ENCODE measurements at regions of chr17 and their contacts with region 1.

Region 1: DNA sequence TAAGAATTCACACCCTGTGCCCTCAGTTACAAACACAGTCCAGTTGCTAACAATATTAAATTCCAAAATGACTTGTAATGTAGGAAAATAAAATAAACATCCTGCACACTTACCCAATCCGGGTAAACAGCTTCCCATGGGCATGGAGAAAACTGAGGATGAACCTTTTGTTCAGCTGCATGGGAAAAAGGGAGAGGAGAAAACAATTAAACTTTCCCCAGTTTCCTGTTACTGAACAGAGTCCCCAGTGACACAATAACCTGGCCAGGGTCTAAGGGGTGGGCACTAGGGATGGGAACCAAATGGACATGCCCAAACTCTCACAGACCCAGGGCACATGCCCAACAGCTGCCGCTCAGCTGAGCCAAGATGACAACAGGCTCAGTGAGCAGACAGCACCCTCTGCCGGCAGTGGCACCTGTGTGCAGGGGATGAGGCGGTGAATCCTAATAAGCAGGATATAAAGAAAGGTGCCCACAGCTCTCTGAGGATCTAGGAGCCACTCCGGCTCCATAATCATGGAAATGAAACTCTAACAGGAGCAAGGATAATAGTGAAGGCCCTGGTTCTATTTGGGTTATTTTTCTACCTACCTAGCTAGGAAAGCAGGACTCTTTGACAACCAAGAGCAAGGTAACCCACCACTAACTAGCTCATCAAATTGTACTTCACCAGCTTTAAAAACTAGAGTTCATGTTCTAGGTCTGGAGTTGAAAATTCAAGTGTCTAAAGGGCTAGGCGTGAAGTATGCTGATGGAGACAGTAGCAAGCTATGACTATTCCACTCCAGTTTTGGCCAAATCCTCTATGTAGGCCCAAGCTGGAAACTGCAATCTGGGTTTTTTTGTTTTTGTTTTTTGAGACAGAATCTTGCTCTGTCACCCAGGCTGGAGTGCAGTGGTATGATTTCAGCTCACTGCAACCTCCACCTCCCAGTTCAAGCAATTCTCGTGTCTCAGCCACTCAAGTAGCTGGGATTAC is 58.8 kb downstream of the SMG6 start:
- DNase-seq: peak; percentile 84
- H3K4me3 ChIP-seq: no peak overlapping the region
- H3K27ac ChIP-seq: no peak overlapping the region
- H3K4me1 ChIP-seq: peaks cover 14% of the 10 kb centered on the region
- CTCF ChIP-seq: peak; percentile 99

Region 2: GRCh38 chr17:1908699-1909309 is 336.0 kb before region 1 on chr17:
- CTCF ChIA-PET with region 1: no interaction called
- POLR2A ChIA-PET with region 1: interaction called, 3 read pairs
- intact Hi-C with region 1: loop called (anchors 1 kb)
- DNase-seq: peak; percentile 79
- H3K4me3 ChIP-seq: peak overlapping the region; percentile 44
- H3K27ac ChIP-seq: no peak overlapping the region
- H3K4me1 ChIP-seq: peaks cover 52% of the 10 kb centered on the region
- CTCF ChIP-seq: peak; percentile 87

Measured in OCI-LY7 (cell line).